Posterior vena cava (tissue), 2 donors: ENCODE measurements at regions of chr4 and their contacts with region 1.

Region 1: DNA sequence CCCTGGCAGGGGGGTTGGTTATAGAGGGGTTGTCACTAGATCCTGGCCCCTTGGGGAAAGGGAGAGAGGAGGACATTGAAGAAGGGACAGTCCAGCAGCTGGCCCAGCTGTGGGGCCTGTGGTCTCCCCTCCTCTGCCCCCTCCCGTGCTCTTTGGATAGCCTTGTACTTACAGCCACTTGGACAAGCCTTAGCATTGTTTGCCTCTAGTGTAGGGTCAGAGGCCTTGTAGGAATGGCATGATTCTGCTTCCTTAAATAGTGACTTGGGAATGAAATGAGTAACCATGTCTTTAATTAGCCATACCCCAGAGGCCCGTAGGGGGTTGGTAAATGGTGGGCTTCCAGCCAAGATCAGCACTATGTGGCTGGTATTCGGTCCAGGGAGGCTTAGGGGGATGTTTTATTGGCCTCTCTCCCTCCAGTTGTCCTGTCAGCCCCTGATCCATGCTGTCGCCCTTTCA is 230.6 kb downstream of the PTTG2 start:
- DNase-seq: no peak

Region 2: DNA sequence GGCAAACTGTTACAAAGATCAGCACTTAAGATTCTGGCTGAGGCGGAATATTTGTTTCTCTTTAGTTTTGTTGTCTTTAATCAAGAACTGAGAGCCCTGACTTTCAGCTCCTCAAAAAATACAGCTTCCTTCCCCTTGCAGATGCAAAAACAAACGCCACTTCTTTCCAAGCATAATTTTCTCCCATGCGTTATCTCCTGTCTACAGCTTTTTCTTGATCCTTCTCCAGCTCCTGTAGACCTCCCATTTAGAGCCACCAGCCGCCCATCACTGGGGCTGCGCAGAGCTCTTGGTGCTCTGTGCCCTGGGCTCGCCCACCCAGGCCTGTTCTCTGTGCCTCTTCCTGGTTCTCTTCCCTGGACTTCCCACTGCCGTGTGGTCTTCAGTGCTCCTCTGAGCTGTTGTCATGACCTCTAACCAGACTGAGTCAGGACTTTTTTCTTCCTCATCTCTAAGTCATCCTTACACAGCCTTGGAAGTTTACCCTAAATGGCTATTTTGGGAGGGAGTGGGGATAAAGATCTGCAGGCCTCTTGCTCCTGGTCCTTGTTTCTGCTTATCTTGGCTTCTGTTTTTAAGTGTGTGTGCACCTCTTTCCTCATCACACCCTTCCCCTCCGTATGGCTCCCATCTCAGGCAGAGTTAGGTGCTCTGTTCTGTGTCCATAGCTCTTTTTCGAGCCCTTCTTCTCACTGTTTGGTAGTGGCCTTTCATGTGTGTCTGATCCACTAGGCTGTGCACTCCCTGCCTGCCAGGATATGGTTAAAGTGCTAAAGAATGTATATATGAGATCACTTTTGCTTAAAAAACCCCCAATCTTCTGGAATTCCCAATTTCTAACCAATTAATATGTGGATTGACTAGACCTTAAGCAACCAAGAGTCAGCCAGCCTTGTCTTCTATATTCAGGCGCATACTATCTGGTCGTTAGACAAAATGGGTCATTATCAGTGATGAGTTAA is 108.0 kb before region 1 on chr4:
- intact Hi-C with region 1: no loop called
- DNase-seq: no peak

Region 3: GRCh38 chr4:38306482-38307071 is 115.8 kb after region 1 on chr4:
- intact Hi-C with region 1: loop called (anchors 5 to 10 kb)
- DNase-seq: no peak